Activated naive CD4-positive, alpha-beta T cell treated with anti-CD3 and anti-CD28 coated beads for 36 hours (primary cell): ENCODE measurements at regions of chr11 and their contacts with region 1.

Region 1: DNA sequence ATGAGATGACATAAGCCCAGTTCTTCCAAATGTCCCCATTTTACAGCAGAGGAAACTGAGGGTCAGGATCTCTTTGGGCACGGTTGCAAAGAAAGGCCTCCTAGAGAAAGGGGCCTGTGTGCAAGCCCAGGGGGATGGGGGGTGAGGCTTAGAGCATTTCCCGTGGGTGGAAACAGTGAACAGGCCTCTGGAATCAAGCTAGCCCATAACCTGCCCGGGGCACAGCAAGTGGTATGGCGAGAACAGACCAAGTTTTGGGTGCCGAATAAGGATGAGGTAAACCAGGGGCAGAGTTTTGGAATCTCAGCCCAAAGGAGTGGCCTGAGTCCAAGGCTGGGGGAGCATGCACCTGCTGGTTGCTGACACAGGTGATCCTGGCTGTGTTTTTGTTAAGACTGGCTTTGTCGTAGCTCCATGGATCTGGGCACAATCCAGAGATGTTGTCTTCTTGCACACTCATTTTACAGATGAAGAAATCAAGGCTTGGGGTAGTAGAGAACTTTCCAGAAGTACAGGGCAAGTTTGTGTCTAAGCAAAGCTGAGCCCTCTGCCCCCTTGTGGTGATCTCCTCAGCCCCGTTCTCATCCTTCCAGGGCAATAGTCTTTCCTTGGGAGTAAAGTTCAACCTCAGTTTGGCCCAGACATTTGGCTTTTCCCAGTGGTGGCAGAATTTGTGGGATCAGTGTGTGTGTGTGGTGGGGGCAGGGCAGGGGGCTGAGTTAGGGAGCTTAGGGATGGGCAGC is 53.5 kb upstream of the MYEOV start:
- DNase-seq: peak; percentile 38
- H3K4me3 Mint-ChIP-seq: no peak overlapping the region
- H3K27ac Mint-ChIP-seq: no peak overlapping the region
- H3K4me1 Mint-ChIP-seq: peaks cover 31% of the 10 kb centered on the region
- H3K27me3 Mint-ChIP-seq: no peaks in the 10 kb centered on the region

Region 2: GRCh38 chr11:69101115-69101791 is 139.2 kb before region 1 on chr11:
- CTCF ChIA-PET with region 1: interaction called, 3 read pairs
- intact Hi-C with region 1: loop called (anchors 1 kb)
- DNase-seq: peak; percentile 81
- H3K4me3 Mint-ChIP-seq: no peak overlapping the region
- H3K27ac Mint-ChIP-seq: no peak overlapping the region
- H3K4me1 Mint-ChIP-seq: peaks cover 4% of the 10 kb centered on the region
- H3K27me3 Mint-ChIP-seq: peaks cover 3% of the 10 kb centered on the region

Region 3: GRCh38 chr11:69122642-69123431 is 117.7 kb before region 1 on chr11:
- CTCF ChIA-PET with region 1: no interaction called
- intact Hi-C with region 1: loop called (anchors 5 kb)
- DNase-seq: peak; percentile 88
- H3K4me3 Mint-ChIP-seq: peak overlapping the region; percentile 32
- H3K27ac Mint-ChIP-seq: peak overlapping the region; percentile 18
- H3K4me1 Mint-ChIP-seq: peaks cover 44% of the 10 kb centered on the region
- H3K27me3 Mint-ChIP-seq: no peaks in the 10 kb centered on the region

Region 4: DNA sequence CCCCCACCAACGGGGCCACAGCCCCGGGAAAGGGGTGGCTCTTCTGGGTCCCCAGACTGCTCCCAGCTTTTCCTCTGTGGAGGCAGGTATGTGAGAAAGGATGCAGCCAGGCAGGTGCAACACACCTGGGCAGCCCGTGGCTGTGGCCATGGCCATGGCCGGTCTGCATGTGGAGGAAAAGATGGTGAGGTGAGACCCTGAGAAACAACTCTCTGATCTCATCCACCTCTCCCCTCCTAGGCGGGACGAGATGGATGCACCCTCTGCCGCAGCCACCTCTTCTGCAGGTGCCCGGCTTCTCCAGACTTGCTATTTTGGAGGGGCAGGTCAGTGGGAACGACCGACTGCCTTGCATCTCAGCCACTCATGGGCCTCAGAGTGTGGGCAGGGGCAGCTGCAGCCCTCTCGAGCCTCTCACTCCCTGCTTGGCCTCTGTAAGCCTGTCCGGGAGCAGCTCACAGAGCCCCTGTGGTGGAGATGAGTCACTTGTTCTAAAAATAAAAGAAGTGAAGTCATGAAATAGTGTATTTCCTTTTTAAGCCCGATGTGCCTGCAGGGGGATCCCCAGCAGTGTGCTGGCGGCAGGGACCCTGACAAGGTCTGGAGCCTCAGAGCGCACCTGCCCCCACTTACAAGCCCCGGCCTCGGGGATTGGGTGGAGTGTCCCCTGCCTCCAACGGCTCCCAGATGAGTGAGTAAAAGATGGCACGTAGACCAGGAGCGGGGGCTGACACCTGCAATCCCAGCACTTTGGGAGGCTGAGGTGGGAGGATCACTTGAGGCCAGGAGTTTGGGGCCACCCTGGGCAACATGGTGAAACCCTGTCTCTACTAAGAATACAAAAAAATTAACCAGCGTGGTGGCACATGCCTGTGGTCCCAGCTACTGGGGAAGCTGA is 74.0 kb before region 1 on chr11:
- CTCF ChIA-PET with region 1: no interaction called
- intact Hi-C with region 1: loop called (anchors 2 kb)
- DNase-seq: peak; percentile 79
- H3K4me3 Mint-ChIP-seq: peak overlapping the region; percentile 27
- H3K27ac Mint-ChIP-seq: peak overlapping the region; percentile 27
- H3K4me1 Mint-ChIP-seq: peaks cover 18% of the 10 kb centered on the region
- H3K27me3 Mint-ChIP-seq: peaks cover 2% of the 10 kb centered on the region

Region 5: GRCh38 chr11:69211920-69212571 is 28.5 kb before region 1 on chr11:
- CTCF ChIA-PET with region 1: no interaction called
- intact Hi-C with region 1: loop called (anchors 1 kb)
- DNase-seq: no peak
- H3K4me3 Mint-ChIP-seq: no peak overlapping the region
- H3K27ac Mint-ChIP-seq: no peak overlapping the region
- H3K4me1 Mint-ChIP-seq: peaks cover 23% of the 10 kb centered on the region
- H3K27me3 Mint-ChIP-seq: no peaks in the 10 kb centered on the region

Region 6: GRCh38 chr11:69546735-69547370 is 306.4 kb after region 1 on chr11:
- CTCF ChIA-PET with region 1: no interaction called
- intact Hi-C with region 1: loop called (anchors 1 kb)
- DNase-seq: peak; percentile 71
- H3K4me3 Mint-ChIP-seq: no peak overlapping the region
- H3K27ac Mint-ChIP-seq: no peak overlapping the region
- H3K4me1 Mint-ChIP-seq: peaks cover 21% of the 10 kb centered on the region
- H3K27me3 Mint-ChIP-seq: peaks cover 26% of the 10 kb centered on the region